ENCODE measurements at regions of chr11 and their contacts with region 1.

Region 1: DNA sequence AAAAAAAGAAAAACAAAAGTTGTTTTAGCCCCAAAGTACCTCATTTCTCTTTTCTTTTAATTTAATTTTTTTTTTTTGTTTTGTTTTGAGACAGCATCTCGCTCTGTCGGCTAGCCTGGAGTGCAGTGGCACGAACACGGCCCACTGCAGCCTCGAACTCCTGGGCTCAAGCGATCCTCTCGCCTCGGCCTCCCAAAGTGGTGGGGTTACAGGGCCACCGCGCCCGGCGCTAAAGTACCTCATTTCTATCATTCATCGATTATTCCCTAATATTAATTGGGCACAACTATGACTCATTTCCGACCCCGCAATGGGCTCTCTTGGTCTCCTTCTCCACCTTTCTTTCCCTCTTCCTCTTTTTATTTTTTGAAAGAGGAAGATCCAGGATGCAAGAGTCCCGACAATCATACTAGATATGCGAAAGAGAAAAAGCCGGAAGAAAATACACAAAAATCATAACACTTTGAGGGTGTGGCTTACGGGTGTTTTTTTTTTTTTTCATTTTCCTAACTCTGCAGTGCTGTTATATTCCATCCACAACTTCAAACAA is 476 bp upstream of the AIP start:
- DNase-seq: no peak
- ATAC-seq: peak; percentile 23 to 52; a peak in 5 of 6 replicates
- H3K4me3 ChIP-seq: peak overlapping the region; percentile 55
- H3K27ac ChIP-seq: peak overlapping the region; percentile 71 to 88
- H3K4me1 ChIP-seq: peaks cover 11% of the 10 kb centered on the region; the same call in 2 of the 3 replicates
- CTCF ChIP-seq: no peak
- EP300 ChIP-seq: no peak
- POLR2A ChIP-seq: no peak
- RAD21 ChIP-seq: no peak

Region 2: DNA sequence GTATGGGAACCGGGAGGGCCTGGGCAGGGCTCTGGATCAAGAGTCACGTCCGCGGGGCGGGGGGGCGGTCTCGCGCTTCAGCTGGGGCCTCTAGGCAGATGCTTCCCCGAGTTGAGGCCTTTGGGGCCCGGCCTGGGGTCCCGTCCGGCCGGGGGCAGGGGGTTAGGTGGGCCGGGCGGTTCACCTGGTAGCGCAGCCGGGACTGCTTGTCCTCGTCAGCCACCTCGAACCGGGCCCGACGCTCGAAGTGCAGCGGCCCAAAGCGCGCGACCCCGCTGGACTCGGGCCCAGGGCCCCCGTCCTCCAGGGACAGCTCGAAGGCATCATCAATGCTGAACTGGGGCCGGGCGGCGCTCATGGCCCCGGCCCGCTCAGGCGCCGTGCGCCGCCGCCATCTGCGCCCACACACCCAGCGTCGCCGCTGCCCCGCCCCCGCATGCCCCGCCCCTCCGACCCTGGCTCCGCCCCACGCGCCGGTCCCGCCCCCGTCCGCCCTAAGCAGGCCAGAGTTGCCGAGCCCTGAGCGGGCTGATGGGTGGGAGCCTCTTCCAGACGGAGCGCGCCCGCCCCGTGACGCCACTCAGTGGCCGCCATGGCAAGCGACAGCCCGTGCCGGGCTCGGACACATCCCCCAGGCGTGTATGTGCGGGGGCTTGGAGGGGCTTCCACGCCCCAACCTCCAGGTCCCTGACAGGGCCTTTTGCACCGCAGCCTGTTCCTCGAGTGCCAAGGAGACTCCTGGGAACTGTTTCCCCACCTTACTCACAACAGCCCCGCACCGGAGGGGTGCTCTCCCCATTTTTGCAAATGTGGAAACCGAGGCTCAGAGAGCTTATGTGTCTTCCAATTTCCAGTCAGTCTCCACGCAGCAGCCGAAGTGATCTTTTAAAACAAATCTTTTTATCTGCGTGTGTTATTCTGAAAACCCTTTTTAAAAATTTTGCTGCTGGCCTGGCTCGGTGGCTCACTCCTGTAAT is 13.2 kb before region 1 on chr11 and contains the start of gene TMEM134:
- CTCF ChIA-PET with region 1: interaction called, 22 read pairs
- POLR2A ChIA-PET with region 1: interaction called, 3 read pairs
- DNase-seq: peak; percentile 81 to 94
- ATAC-seq: peak; percentile 75 to 78
- H3K4me3 ChIP-seq: peak within 1 kb of the TSS; percentile 67
- H3K27ac ChIP-seq: peak within 1 kb of the TSS; percentile 83 to 97
- H3K4me1 ChIP-seq: peaks cover 28% of the 10 kb centered on the region
- CTCF ChIP-seq: peak; percentile 53
- EP300 ChIP-seq: no peak
- POLR2A ChIP-seq: peak; percentile 73
- RAD21 ChIP-seq: peak; percentile 54 to 74
- polyA plus RNA-seq, gene TMEM134: 18.1 and 18.8 TPM in 2 replicates